Activated CD8-positive, alpha-beta T cell treated with anti-CD3 and anti-CD28 coated beads for 36 hours (primary cell): ENCODE measurements at regions of chr6 and their contacts with region 1.

Region 1: DNA sequence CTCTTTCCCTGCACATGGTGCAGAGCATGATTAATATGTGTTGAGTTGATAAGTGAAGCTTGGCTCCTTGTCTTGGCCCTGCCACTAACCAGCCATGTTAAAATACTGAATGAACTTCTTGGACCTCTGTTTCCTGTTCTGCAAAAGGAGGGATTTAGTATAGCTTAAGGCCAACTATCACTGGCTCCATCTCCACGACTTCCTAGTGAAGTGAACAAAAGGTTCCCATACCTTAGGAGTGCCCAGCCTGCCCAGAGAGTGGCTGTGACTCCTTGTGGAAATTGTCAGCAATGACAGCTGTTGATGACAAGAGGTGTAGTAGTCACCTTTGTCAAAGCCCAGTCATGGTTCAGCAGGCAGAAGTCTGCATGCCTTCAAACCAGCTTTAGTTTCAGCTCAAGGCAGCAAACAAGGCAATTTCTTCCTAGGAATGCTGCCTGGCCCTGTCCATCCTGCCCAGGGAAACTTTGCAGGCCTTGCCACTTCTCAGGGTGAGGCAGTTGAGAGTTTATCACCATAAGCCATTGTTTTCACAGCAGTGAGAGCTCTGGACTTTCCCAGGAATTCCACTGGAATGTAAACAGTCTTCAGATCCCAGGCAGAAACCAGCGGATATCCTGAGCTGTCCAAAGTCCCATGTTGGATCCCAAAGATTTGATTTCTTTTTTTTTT is 169.7 kb upstream of the TNFAIP3 start:
- DNase-seq: no peak
- ATAC-seq: peak; percentile 29
- H3K4me3 Mint-ChIP-seq: no peak overlapping the region
- H3K27ac Mint-ChIP-seq: peak overlapping the region; percentile 55
- H3K4me1 Mint-ChIP-seq: peaks cover 43% of the 10 kb centered on the region
- H3K27me3 Mint-ChIP-seq: peaks cover 8% of the 10 kb centered on the region
- CTCF ChIP-seq: no peak

Region 2: GRCh38 chr6:137465378-137466009 is 231.9 kb before region 1 on chr6:
- CTCF ChIA-PET with region 1: no interaction called
- POLR2A ChIA-PET with region 1: no interaction called
- intact Hi-C with region 1: no loop called
- DNase-seq: no peak
- ATAC-seq: no peak
- H3K4me3 Mint-ChIP-seq: no peak overlapping the region
- H3K27ac Mint-ChIP-seq: no peak overlapping the region
- H3K4me1 Mint-ChIP-seq: no peaks in the 10 kb centered on the region
- H3K27me3 Mint-ChIP-seq: peaks cover 1% of the 10 kb centered on the region
- CTCF ChIP-seq: no peak

Region 3: DNA sequence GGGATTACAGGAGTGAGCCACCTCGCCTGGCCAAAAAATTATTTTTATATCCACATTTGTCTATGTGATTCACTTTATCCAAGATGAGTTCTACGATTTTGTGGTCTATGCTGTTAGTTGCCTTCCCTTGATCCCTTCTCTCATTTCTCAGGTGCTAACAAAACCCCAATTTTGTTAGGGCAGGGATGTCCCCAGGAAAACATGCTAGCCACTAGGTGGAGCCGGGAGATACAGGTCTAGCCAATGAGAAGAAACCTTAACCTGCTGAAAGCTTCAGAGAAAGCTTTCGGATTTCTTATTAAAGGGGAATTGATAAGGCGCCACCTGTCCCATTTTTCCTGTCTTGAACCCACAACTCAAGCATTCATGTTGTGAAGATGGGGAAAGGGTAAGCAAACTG is 35.8 kb before region 1 on chr6:
- CTCF ChIA-PET with region 1: interaction called, 50 read pairs
- POLR2A ChIA-PET with region 1: interaction called, 6 read pairs
- intact Hi-C with region 1: loop called (anchors 5 kb)
- DNase-seq: peak; percentile 71
- ATAC-seq: no peak
- H3K4me3 Mint-ChIP-seq: no peak overlapping the region
- H3K27ac Mint-ChIP-seq: no peak overlapping the region
- H3K4me1 Mint-ChIP-seq: peaks cover 22% of the 10 kb centered on the region
- H3K27me3 Mint-ChIP-seq: peaks cover 2% of the 10 kb centered on the region
- CTCF ChIP-seq: peak; percentile 32

Region 4: GRCh38 chr6:137680705-137681346 is 16.6 kb before region 1 on chr6:
- CTCF ChIA-PET with region 1: interaction called, 32 read pairs
- POLR2A ChIA-PET with region 1: interaction called, 9 read pairs
- intact Hi-C with region 1: loop called (anchors 2 kb)
- DNase-seq: no peak
- ATAC-seq: peak; percentile 50
- H3K4me3 Mint-ChIP-seq: no peak overlapping the region
- H3K27ac Mint-ChIP-seq: no peak overlapping the region
- H3K4me1 Mint-ChIP-seq: peaks cover 34% of the 10 kb centered on the region
- H3K27me3 Mint-ChIP-seq: no peaks in the 10 kb centered on the region
- CTCF ChIP-seq: no peak

Region 5: GRCh38 chr6:137728385-137729349 is 31.3 kb after region 1 on chr6:
- CTCF ChIA-PET with region 1: no interaction called
- POLR2A ChIA-PET with region 1: no interaction called
- intact Hi-C with region 1: no loop called
- DNase-seq: no peak
- ATAC-seq: no peak
- H3K4me3 Mint-ChIP-seq: no peak overlapping the region
- H3K27ac Mint-ChIP-seq: no peak overlapping the region
- H3K4me1 Mint-ChIP-seq: no peaks in the 10 kb centered on the region
- H3K27me3 Mint-ChIP-seq: no peaks in the 10 kb centered on the region
- CTCF ChIP-seq: no peak

Region 6: DNA sequence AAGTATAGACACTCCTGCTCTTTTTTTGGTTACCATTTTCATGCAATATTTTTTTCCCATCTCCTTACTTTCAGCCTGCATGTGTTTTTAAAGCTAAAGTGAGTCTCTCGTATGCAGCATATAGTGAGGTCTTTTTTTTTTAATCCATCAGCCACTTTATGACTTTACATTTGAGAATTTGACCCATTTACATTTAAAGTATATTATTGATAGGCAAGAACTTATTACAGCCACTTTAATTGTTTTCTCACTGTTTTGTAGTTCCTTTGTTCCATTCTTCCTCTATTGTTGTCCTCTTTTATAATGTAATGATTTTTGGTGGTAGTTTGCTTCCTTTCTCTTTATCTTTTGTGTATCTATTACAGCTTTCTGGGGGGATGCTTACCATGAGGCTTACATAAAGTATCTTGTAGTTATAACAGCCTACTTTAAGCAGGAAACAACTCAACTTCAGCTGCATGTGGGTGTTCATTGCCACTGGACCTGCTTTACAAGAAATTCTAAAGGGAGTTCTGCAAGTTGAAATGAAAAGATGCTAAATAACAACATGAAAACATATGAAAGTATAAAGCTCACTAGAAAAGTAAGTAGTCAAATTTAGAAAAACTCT is 241.5 kb after region 1 on chr6:
- CTCF ChIA-PET with region 1: interaction called, 13 read pairs
- POLR2A ChIA-PET with region 1: no interaction called
- intact Hi-C with region 1: no loop called
- DNase-seq: no peak
- ATAC-seq: no peak
- H3K4me3 Mint-ChIP-seq: peak overlapping the region; percentile 39
- H3K27ac Mint-ChIP-seq: peak overlapping the region; percentile 92
- H3K4me1 Mint-ChIP-seq: peaks cover 44% of the 10 kb centered on the region
- H3K27me3 Mint-ChIP-seq: no peaks in the 10 kb centered on the region
- CTCF ChIP-seq: no peak

Region 7: DNA sequence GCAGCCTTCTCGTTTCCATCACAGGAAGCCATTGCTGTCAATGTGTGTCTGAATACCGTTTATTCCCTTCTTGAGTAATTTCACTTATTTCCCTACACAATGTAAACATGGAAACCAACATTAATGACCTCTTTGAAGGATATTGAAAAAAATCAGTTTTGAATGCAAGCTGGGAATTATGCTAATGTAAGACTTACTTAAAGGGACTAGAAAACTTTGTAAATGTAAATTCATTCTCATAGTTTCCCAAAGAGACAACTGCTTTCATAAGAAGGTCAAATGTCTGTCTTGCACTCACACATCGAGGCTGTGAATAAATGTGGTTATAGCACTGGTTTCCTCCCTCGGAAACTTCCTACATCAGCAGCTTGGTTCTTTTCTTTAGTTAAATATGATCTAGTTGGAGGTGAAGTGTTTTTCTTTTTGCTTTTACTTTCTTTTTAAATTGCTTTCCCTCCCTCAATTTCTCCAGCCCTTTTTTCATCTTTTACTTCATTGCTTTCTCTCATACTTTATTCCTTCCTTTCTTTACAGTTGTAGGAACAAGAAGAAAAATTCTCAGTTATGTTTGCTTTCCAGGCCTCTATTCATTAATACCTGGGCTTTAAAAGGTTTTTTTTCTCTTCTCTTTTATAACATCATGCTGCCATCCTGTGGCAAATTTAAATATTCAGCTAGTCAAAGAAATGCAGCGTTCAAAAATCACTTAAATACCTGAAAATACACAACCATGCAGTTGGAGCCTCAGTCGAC is 278.0 kb after region 1 on chr6:
- CTCF ChIA-PET with region 1: interaction called, 15 read pairs
- POLR2A ChIA-PET with region 1: no interaction called
- intact Hi-C with region 1: no loop called
- DNase-seq: peak; percentile 64
- ATAC-seq: peak; percentile 69
- H3K4me3 Mint-ChIP-seq: peak overlapping the region; percentile 70
- H3K27ac Mint-ChIP-seq: peak overlapping the region; percentile 94
- H3K4me1 Mint-ChIP-seq: peaks cover 70% of the 10 kb centered on the region
- H3K27me3 Mint-ChIP-seq: no peaks in the 10 kb centered on the region
- CTCF ChIP-seq: peak; percentile 82